Transverse colon (tissue), 4 donors: ENCODE measurements at regions of chr10 and their contacts with region 1.

Region 1: GRCh38 chr10:129030996-129031843 is 435.8 kb upstream of the MGMT start:
- DNase-seq: peak; percentile 43
- H3K4me3 ChIP-seq: no peak overlapping the region
- H3K27ac ChIP-seq: no peak overlapping the region
- H3K4me1 ChIP-seq: peaks cover 0 to 6% (median 0%) of the 10 kb centered on the region in 4 donors
- H3K27me3 ChIP-seq: peaks cover 91% of the 10 kb centered on the region
- CTCF ChIP-seq: peak; percentile 63 to 86 (median 78)
- EP300 ChIP-seq: no peak
- POLR2A ChIP-seq: no peak

Region 2: DNA sequence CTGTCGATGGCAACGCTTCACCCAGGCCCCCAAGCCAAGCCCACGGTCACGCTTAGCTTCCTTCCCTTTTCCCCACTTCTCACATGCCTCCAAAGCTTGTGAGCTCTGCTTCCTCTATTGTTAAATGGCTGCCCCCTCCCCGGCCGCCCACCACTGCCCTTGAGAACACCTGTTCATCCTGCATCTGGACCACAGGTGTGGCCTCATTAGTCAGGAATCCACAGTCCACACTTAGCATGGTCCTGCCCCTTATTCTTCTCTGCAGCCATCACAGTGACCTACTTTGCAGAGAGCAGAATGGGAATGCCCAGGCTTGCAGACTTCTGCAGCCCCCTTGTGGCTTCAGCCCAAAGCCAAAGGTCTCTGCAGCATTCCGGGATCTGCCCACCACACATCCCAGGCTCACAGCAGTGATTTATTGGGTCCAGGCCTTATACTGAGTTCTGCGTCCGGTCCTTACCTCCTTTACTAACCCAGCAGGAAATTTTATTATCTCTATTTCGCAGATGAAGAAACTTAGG is 1057.4 kb before region 1 on chr10:
- in situ Hi-C with region 1: no loop called
- intact Hi-C with region 1: no loop called
- DNase-seq: no peak
- H3K4me3 ChIP-seq: no peak overlapping the region
- H3K27ac ChIP-seq: peak overlapping the region in 1 of 4 donors; percentile 9
- H3K4me1 ChIP-seq: peaks cover 0 to 38% (median 8%) of the 10 kb centered on the region in 4 donors
- H3K27me3 ChIP-seq: no peaks in the 10 kb centered on the region
- CTCF ChIP-seq: no peak
- EP300 ChIP-seq: no peak
- POLR2A ChIP-seq: no peak

Region 3: GRCh38 chr10:129332476-129332875 is 301.3 kb after region 1 on chr10:
- in situ Hi-C with region 1: no loop called
- intact Hi-C with region 1: loop called (anchors 10 kb)
- DNase-seq: no peak
- H3K4me3 ChIP-seq: no peak overlapping the region
- H3K27ac ChIP-seq: no peak overlapping the region
- H3K4me1 ChIP-seq: no peaks in the 10 kb centered on the region
- H3K27me3 ChIP-seq: no peaks in the 10 kb centered on the region
- CTCF ChIP-seq: peak in 1 of 5 experiments; percentile 15
- EP300 ChIP-seq: no peak
- POLR2A ChIP-seq: no peak

Region 4: GRCh38 chr10:129971381-129972144 is 940.3 kb after region 1 on chr10:
- in situ Hi-C with region 1: loop called in 3 of 4 experiments (anchors 10 to 25 kb)
- intact Hi-C with region 1: loop called (anchors 5 kb)
- DNase-seq: peak; percentile 41
- H3K4me3 ChIP-seq: peak overlapping the region in 3 of 4 donors; percentile 14 to 34 (median 17)
- H3K27ac ChIP-seq: no peak overlapping the region
- H3K4me1 ChIP-seq: peaks cover 4 to 37% (median 17%) of the 10 kb centered on the region in 4 donors
- H3K27me3 ChIP-seq: peaks cover 98% of the 10 kb centered on the region
- CTCF ChIP-seq: peak in 2 of 5 experiments; percentile 42 to 44
- EP300 ChIP-seq: no peak
- POLR2A ChIP-seq: no peak

Region 5: GRCh38 chr10:129993621-129994020 is 962.4 kb after region 1 on chr10:
- in situ Hi-C with region 1: loop called in 1 of 4 experiments (anchors 25 kb)
- intact Hi-C with region 1: no loop called
- DNase-seq: no peak
- H3K4me3 ChIP-seq: no peak overlapping the region
- H3K27ac ChIP-seq: no peak overlapping the region
- H3K4me1 ChIP-seq: no peaks in the 10 kb centered on the region
- H3K27me3 ChIP-seq: no peaks in the 10 kb centered on the region
- CTCF ChIP-seq: no peak
- EP300 ChIP-seq: no peak
- POLR2A ChIP-seq: no peak

Region 6: GRCh38 chr10:130110246-130111112 is 1079.3 kb after region 1 on chr10 and contains the start of gene C10orf143:
- in situ Hi-C with region 1: loop called in 1 of 4 experiments (anchors 25 kb)
- intact Hi-C with region 1: no loop called
- DNase-seq: peak; percentile 98
- H3K4me3 ChIP-seq: peak within 1 kb of the TSS; percentile 67 to 77 (median 72)
- H3K27ac ChIP-seq: peak within 1 kb of the TSS; percentile 87 to 96 (median 94)
- H3K4me1 ChIP-seq: peaks cover 3 to 23% (median 18%) of the 10 kb centered on the region in 4 donors
- H3K27me3 ChIP-seq: no peaks in the 10 kb centered on the region
- CTCF ChIP-seq: no peak
- EP300 ChIP-seq: no peak
- POLR2A ChIP-seq: peak; percentile 92
- total RNA-seq, gene C10orf143: 3.8 to 4.0 TPM in 2 of 4 donors, not detected in the others